Natural killer cell (primary cell): ENCODE measurements at regions of chr14 and their contacts with region 1.

Region 1: GRCh38 chr14:61730756-61731373 is 31.4 kb upstream of the SNAPC1 start:
- DNase-seq: peak in 1 of 2 donors; percentile 65
- ATAC-seq: no peak
- H3K4me3 ChIP-seq: no peak overlapping the region
- H3K4me3 Mint-ChIP-seq: no peak overlapping the region
- H3K27ac ChIP-seq: no peak overlapping the region
- H3K27ac Mint-ChIP-seq: peak overlapping the region; percentile 17 to 42
- H3K4me1 ChIP-seq: no peaks in the 10 kb centered on the region
- H3K4me1 Mint-ChIP-seq: peaks cover 5 to 11% of the 10 kb centered on the region in 2 donors
- H3K27me3 ChIP-seq: no peaks in the 10 kb centered on the region
- H3K27me3 Mint-ChIP-seq: no peaks in the 10 kb centered on the region
- CTCF ChIP-seq: peak; percentile 65

Region 2: GRCh38 chr14:61296719-61297502 is 434.0 kb before region 1 on chr14:
- intact Hi-C with region 1: loop called (anchors 5 kb)
- DNase-seq: peak in 1 of 2 donors; percentile 81
- ATAC-seq: peak; percentile 63 to 84 (median 80)
- H3K4me3 ChIP-seq: no peak overlapping the region
- H3K4me3 Mint-ChIP-seq: no peak overlapping the region
- H3K27ac ChIP-seq: no peak overlapping the region
- H3K27ac Mint-ChIP-seq: no peak overlapping the region
- H3K4me1 ChIP-seq: peaks cover 6% of the 10 kb centered on the region
- H3K4me1 Mint-ChIP-seq: peaks cover 17 to 29% of the 10 kb centered on the region in 2 donors
- H3K27me3 ChIP-seq: no peaks in the 10 kb centered on the region
- H3K27me3 Mint-ChIP-seq: no peaks in the 10 kb centered on the region
- CTCF ChIP-seq: peak; percentile 89

Region 3: DNA sequence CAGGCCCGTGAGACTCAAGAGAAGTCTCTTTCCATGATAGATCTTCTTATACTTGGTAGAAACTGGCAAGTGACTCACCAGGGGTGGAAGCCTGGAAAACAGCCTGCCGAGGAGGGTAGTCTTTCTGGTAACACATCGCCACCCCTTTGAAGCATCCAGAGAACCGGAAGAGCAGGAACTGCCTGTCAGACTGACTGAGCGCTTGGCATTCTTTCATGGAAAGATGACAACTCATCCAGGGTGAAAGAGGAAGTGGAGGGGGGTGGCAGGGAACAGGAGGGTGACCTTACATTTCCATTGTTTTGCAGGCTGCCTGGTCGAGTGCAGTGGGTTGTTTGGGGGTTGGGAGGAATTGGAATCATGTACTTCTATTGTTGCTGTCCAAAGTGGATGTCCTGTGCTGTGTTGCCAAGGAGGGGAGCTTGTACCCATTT is 375.0 kb before region 1 on chr14:
- intact Hi-C with region 1: no loop called
- DNase-seq: peak in 1 of 2 donors; percentile 59
- ATAC-seq: peak in 1 of 3 donors; percentile 57
- H3K4me3 ChIP-seq: no peak overlapping the region
- H3K4me3 Mint-ChIP-seq: peak overlapping the region; percentile 71
- H3K27ac ChIP-seq: peak overlapping the region; percentile 51
- H3K27ac Mint-ChIP-seq: no peak overlapping the region
- H3K4me1 ChIP-seq: peaks cover 60% of the 10 kb centered on the region
- H3K4me1 Mint-ChIP-seq: peaks cover 97 to 100% of the 10 kb centered on the region in 2 donors
- H3K27me3 ChIP-seq: no peaks in the 10 kb centered on the region
- H3K27me3 Mint-ChIP-seq: no peaks in the 10 kb centered on the region
- CTCF ChIP-seq: no peak

Region 4: DNA sequence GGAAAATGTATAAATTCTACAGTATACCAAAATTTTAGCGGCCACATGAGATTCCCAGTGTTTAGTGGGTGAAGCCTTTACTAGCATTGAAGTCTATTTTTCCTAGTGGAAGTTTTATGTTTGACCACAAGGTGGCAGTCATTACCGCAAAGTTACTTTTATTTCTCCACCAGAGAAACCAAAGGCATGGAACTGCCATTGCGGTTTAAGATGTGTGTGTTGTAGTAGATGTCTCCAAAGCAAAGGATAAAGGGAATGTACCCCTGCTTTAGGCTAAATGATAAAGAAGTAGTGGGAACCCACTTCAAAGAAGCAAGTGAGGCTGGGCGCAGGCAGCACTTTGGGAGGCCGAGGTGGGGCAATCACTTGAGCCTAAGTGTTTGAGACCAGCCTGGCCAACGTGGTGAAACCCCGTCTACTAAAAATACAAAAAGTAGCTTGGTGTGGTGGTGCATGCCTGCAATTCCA is 269.0 kb before region 1 on chr14:
- intact Hi-C with region 1: loop called (anchors 1 kb)
- DNase-seq: peak in 1 of 2 donors; percentile 84
- ATAC-seq: peak; percentile 60 to 70 (median 66)
- H3K4me3 ChIP-seq: no peak overlapping the region
- H3K4me3 Mint-ChIP-seq: peak overlapping the region; percentile 41
- H3K27ac ChIP-seq: no peak overlapping the region
- H3K27ac Mint-ChIP-seq: no peak overlapping the region
- H3K4me1 ChIP-seq: peaks cover 27% of the 10 kb centered on the region
- H3K4me1 Mint-ChIP-seq: peaks cover 60 to 72% of the 10 kb centered on the region in 2 donors
- H3K27me3 ChIP-seq: no peaks in the 10 kb centered on the region
- H3K27me3 Mint-ChIP-seq: no peaks in the 10 kb centered on the region
- CTCF ChIP-seq: peak; percentile 78

Region 5: GRCh38 chr14:61837336-61838229 is 106.7 kb after region 1 on chr14:
- intact Hi-C with region 1: loop called (anchors 10 kb)
- DNase-seq: peak; percentile 58 to 90
- ATAC-seq: peak; percentile 90 to 98 (median 98)
- H3K4me3 ChIP-seq: no peak overlapping the region
- H3K4me3 Mint-ChIP-seq: no peak overlapping the region
- H3K27ac ChIP-seq: no peak overlapping the region
- H3K27ac Mint-ChIP-seq: no peak overlapping the region
- H3K4me1 ChIP-seq: no peaks in the 10 kb centered on the region
- H3K4me1 Mint-ChIP-seq: no peaks in the 10 kb centered on the region
- H3K27me3 ChIP-seq: no peaks in the 10 kb centered on the region
- H3K27me3 Mint-ChIP-seq: peaks cover 21 to 32% of the 10 kb centered on the region in 2 donors
- CTCF ChIP-seq: peak; percentile 90